Activated B cell treated with CpG ODN at 0.5 μM for 24 hours (primary cell): ENCODE measurements at regions of chr15 and their contacts with region 1.

Region 1: DNA sequence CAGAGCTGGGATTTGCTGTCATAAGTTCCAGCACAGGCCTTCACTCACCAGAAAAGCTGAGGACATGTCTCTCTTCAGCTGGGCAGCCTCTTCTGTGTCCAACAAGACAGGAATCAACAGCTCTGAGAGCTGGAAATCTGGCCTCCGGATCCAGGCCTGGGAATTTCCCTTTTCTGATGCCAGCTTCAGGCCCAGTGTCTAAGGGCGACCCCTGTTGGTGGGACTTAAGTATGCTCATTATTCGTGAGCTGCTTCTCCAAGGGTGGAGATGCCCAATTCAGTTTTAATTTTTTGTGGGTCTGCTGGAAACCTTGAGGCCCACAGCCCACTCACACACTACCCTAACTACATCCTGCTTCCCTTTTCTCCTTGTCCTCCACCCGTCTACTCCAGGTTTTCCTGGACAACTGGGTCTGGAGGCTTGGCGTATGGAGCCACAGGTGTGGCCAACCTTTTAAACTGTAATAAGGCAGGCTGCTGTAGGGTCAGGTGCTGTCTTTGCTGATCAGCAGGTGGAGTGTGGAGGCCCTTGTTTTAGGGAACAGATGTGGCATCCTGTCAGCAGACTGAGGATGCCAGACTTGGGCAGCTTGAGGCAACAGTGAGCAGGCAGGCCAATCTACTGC is 2.6 kb upstream of the CEMIP start:
- DNase-seq: peak; percentile 27
- ATAC-seq: peak; percentile 62
- H3K4me3 Mint-ChIP-seq: no peak overlapping the region
- H3K27ac Mint-ChIP-seq: no peak overlapping the region
- H3K4me1 Mint-ChIP-seq: peaks cover 8% of the 10 kb centered on the region
- H3K27me3 Mint-ChIP-seq: peaks cover 24% of the 10 kb centered on the region
- CTCF ChIP-seq: no peak

Region 2: GRCh38 chr15:80455668-80456442 is 320.7 kb before region 1 on chr15:
- CTCF ChIA-PET with region 1: interaction called, 54 read pairs
- POLR2A ChIA-PET with region 1: no interaction called
- intact Hi-C with region 1: no loop called
- DNase-seq: peak; percentile 23
- ATAC-seq: peak; percentile 73
- H3K4me3 Mint-ChIP-seq: no peak overlapping the region
- H3K27ac Mint-ChIP-seq: no peak overlapping the region
- H3K4me1 Mint-ChIP-seq: no peaks in the 10 kb centered on the region
- H3K27me3 Mint-ChIP-seq: peaks cover 7% of the 10 kb centered on the region
- CTCF ChIP-seq: peak; percentile 70

Region 3: DNA sequence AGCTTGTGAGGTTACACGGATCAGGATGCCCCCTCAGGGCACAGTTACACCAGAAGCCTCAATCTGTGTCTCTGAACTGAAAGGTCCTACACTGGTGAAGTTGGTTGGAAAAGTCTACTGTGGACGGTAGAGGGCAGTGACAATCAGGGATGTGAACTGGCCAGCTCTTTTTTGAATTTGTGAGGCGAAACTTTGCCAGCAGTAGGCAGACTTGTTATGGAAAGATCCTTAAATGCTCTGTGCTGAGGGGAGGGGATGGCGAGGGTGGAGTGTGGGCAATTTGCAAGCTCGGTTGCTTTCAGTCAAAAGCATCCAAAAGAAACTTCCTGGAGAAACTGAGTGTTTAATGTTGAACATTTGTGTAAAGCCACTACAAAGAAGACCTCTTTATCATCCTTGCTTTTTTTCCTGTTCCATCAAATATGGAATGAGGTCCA is 208.8 kb before region 1 on chr15:
- CTCF ChIA-PET with region 1: interaction called, 19 read pairs
- POLR2A ChIA-PET with region 1: no interaction called
- intact Hi-C with region 1: loop called (anchors 1 kb)
- DNase-seq: no peak
- ATAC-seq: no peak
- H3K4me3 Mint-ChIP-seq: no peak overlapping the region
- H3K27ac Mint-ChIP-seq: no peak overlapping the region
- H3K4me1 Mint-ChIP-seq: no peaks in the 10 kb centered on the region
- H3K27me3 Mint-ChIP-seq: peaks cover 13% of the 10 kb centered on the region
- CTCF ChIP-seq: no peak

Region 4: DNA sequence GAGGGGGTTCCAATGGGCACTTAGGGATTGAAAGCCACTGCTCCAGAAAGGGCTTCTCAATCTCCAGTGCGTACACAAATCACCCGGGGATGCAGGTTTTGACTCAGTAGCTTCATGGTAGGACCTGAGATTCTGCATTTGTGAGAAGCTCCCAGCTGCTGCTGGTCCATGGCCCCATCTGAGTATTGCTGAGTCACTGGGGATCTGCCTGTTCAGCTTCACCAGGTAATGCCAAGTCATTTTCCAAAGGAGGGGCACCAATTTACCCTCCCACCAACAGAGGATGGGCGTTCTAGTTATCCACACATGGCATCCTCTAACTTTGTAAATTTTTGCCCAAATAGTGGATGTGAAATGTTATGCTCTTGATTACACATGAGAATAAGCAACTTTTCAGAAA is 10.3 kb before region 1 on chr15:
- CTCF ChIA-PET with region 1: interaction called, 10 read pairs
- POLR2A ChIA-PET with region 1: no interaction called
- intact Hi-C with region 1: no loop called
- DNase-seq: no peak
- ATAC-seq: no peak
- H3K4me3 Mint-ChIP-seq: no peak overlapping the region
- H3K27ac Mint-ChIP-seq: no peak overlapping the region
- H3K4me1 Mint-ChIP-seq: no peaks in the 10 kb centered on the region
- H3K27me3 Mint-ChIP-seq: peaks cover 2% of the 10 kb centered on the region
- CTCF ChIP-seq: no peak

Region 5: DNA sequence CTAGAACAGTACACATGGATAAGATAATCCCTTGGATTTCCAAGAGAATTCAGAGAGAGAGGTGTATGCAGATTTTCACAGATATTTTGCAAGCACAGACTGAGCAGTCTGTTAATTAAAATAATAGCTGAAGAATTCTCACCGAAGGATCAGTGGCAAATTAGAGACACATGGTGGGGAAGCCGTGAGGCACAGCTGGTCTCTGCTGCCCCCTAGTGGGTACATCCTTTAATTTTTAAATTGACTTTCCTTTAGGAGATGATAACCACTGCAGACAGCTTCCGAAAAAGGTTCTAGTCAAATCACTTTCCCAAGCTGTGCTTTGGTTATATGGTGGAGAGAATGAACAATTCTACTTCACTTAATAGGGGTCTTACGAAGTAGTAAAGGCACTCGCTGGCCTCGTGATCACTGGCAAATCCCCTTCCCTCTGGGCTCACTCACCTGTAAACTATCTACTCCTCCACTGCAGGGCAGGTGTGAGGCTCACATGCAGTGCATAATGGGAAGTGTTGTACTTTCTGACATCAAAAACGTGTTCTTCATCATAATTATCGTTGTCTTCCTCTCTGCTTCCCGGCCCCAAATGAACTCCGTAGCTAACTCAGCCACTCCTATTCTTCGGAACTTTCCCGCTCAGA is 193.6 kb after region 1 on chr15:
- CTCF ChIA-PET with region 1: interaction called, 13 read pairs
- POLR2A ChIA-PET with region 1: no interaction called
- intact Hi-C with region 1: loop called (anchors 1 kb)
- DNase-seq: no peak
- ATAC-seq: peak; percentile 56
- H3K4me3 Mint-ChIP-seq: no peak overlapping the region
- H3K27ac Mint-ChIP-seq: no peak overlapping the region
- H3K4me1 Mint-ChIP-seq: peaks cover 9% of the 10 kb centered on the region
- H3K27me3 Mint-ChIP-seq: no peaks in the 10 kb centered on the region
- CTCF ChIP-seq: peak; percentile 91